PC-3 (cell line): ENCODE measurements at regions of chr17 and their contacts with region 1.

Region 1: GRCh38 chr17:56779898-56780733 is 53.6 kb downstream of the C17orf67 start:
- DNase-seq: peak; percentile 95
- ATAC-seq: peak; percentile 91
- H3K4me3 ChIP-seq: peak overlapping the region; percentile 70
- H3K27ac ChIP-seq: peak overlapping the region; percentile 37
- H3K4me1 ChIP-seq: peaks cover 52% of the 10 kb centered on the region
- H3K27me3 ChIP-seq: no peaks in the 10 kb centered on the region
- CTCF ChIP-seq: peak; percentile 97

Region 2: GRCh38 chr17:55444471-55445441 is 1335.4 kb before region 1 on chr17:
- CTCF ChIA-PET with region 1: no interaction called
- POLR2A ChIA-PET with region 1: no interaction called
- intact Hi-C with region 1: no loop called
- DNase-seq: no peak
- ATAC-seq: no peak
- H3K4me3 ChIP-seq: no peak overlapping the region
- H3K27ac ChIP-seq: no peak overlapping the region
- H3K4me1 ChIP-seq: peaks cover 13% of the 10 kb centered on the region
- H3K27me3 ChIP-seq: no peaks in the 10 kb centered on the region
- CTCF ChIP-seq: no peak

Region 3: DNA sequence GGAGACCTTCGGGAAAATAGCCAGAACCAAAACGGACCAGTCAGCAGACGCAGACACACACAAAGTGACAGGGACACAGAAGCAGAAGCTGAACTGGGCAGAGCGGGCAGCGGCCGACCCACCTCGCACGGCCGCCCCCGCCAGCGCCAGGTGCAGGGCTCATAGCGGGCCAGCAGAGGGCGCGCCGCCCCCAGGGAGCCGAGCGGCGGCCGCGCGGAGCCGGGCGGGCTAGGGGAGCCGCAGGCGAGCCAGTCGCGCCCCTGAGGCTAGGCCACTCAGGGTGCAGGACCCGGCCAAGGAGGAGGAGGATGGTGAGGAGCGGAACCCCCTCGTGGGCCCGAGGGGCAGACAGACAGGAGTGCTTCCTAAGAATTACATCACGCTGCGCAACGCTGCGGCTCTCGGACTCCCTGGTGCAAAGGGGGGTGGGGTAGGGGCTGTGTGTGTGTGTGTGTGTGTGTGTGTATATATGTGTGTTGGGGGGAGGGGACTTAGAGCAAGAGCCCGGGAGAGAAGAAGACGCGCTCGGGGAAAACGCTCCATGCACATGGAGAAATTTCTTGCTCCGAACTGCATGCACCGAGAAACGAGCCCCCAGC is 187.5 kb before region 1 on chr17:
- CTCF ChIA-PET with region 1: interaction called, 20 read pairs
- POLR2A ChIA-PET with region 1: interaction called, 5 read pairs
- intact Hi-C with region 1: loop called (anchors 1 kb)
- DNase-seq: peak; percentile 81
- ATAC-seq: peak; percentile 36
- H3K4me3 ChIP-seq: peak overlapping the region; percentile 74
- H3K27ac ChIP-seq: no peak overlapping the region
- H3K4me1 ChIP-seq: peaks cover 11% of the 10 kb centered on the region; the same call in 1 of the 2 replicates
- H3K27me3 ChIP-seq: peaks cover 26% of the 10 kb centered on the region
- CTCF ChIP-seq: peak; percentile 93

Region 4: DNA sequence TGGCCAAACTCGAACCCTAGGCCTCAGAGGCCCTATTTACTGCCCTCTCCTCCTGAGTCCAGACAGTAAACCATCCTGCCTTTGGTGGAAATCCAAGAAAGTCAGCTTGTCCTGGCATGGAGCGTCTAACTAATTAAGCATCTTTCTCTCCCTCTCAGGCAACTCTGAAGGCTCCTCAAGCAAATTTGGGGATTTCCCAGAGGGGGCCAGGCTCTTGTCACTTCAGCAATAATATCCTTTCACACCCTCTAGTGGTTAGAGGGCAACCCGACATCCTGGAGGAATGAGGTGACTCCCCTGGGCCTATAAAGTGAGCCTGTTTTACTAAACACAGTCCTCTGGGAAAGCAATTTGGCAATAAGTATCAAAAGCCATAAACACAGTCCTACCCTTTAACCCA is 126.2 kb before region 1 on chr17:
- CTCF ChIA-PET with region 1: interaction called, 3 read pairs
- POLR2A ChIA-PET with region 1: no interaction called
- intact Hi-C with region 1: loop called (anchors 1 kb)
- DNase-seq: peak; percentile 91
- ATAC-seq: peak; percentile 87
- H3K4me3 ChIP-seq: no peak overlapping the region
- H3K27ac ChIP-seq: no peak overlapping the region
- H3K4me1 ChIP-seq: peaks cover 14% of the 10 kb centered on the region
- H3K27me3 ChIP-seq: no peaks in the 10 kb centered on the region
- CTCF ChIP-seq: peak; percentile 91

Region 5: DNA sequence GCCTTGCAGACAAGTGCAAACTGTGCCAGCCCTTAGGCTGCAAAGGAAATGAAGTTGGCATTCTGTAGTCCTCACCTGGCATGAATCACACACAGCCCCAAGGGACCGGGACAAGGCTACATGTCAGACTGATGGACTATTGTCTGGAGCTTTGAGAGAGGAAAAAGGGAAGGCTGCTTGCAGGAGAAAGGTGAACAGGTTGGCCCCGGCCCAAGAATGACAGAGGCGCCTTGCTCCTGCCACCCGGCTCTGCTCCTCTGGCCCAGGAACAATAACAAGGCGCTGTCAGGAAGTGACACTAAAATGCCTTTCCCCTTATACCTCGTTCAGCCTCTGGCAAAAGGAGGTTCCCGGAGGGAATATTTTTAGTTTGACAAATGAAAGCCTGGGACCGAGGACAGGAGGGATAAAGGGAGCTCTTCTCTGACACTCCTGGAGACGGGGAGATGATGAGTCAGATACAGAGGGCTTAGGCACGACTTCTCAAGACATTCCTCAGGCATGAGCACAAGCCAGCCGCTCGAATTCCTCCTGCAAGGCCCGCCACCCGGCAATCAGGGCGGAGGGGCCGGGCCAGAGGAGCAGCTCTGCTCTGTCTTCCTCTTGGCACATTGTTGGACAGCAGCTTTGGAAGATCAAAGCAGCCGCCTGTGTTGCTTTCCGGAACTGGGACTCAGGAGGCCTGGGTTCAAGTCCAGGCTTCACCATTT is 80.8 kb before region 1 on chr17:
- CTCF ChIA-PET with region 1: interaction called, 14 read pairs
- POLR2A ChIA-PET with region 1: interaction called, 4 read pairs
- intact Hi-C with region 1: loop called (anchors 1 kb)
- DNase-seq: peak; percentile 100
- ATAC-seq: peak; percentile 95
- H3K4me3 ChIP-seq: peak overlapping the region; percentile 46; the same call in 1 of the 2 replicates
- H3K27ac ChIP-seq: peak overlapping the region; percentile 90
- H3K4me1 ChIP-seq: peaks cover 23% of the 10 kb centered on the region
- H3K27me3 ChIP-seq: no peaks in the 10 kb centered on the region
- CTCF ChIP-seq: no peak

Region 6: DNA sequence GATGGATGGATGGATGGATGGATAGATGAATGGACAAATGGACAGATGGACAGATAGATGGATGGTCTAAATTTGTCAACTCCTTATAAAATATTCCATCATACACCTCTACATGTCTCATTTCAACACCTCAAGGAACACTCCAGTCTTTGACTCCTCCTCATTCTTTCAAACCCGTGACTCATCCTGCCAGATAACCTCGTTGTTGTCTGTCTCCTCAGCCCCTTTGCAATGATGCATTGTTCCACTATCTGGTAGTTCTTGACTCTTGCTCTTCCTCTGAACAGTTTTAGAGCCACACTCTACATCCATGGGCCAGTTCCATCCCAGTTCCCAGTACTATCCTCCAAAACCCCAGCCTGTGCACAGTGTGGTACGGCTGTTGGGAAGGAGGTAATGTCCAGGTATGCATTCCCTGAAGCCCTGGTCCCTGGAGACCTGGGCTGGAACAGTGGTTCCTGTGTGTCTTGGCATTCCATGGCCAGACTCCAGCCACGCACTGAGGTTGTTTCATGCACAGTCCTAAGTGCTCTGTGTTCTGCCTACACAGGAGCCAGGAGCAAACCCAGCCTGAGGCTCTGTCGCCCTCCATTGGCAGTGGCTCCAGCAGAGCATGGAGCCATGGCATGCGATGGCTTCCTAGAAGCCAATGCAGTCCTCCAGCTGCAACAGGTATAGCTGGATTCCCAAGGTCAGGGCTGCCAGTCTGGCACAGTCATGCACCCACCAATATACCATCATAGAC is 52.1 kb before region 1 on chr17:
- CTCF ChIA-PET with region 1: no interaction called
- POLR2A ChIA-PET with region 1: no interaction called
- intact Hi-C with region 1: no loop called
- DNase-seq: no peak
- ATAC-seq: no peak; the same call in 1 of the 2 replicates
- H3K4me3 ChIP-seq: no peak overlapping the region
- H3K27ac ChIP-seq: no peak overlapping the region
- H3K4me1 ChIP-seq: no peaks in the 10 kb centered on the region
- H3K27me3 ChIP-seq: no peaks in the 10 kb centered on the region
- CTCF ChIP-seq: no peak

Region 7: GRCh38 chr17:56754523-56755208 is 25.4 kb before region 1 on chr17:
- CTCF ChIA-PET with region 1: interaction called, 18 read pairs
- POLR2A ChIA-PET with region 1: interaction called, 7 read pairs
- intact Hi-C with region 1: loop called (anchors 1 kb)
- DNase-seq: peak; percentile 40
- ATAC-seq: peak; percentile 69
- H3K4me3 ChIP-seq: no peak overlapping the region
- H3K27ac ChIP-seq: no peak overlapping the region
- H3K4me1 ChIP-seq: peaks cover 19% of the 10 kb centered on the region
- H3K27me3 ChIP-seq: no peaks in the 10 kb centered on the region
- CTCF ChIP-seq: no peak